ENCODE measurements at regions of chr1 and their contacts with region 1.

Region 1: GRCh38 chr1:201559679-201560162 is 20.8 kb downstream of the NAV1 start:
- DNase-seq: peak; percentile 77
- ATAC-seq: peak; percentile 99
- H3K4me3 Mint-ChIP-seq: no peak overlapping the region
- H3K27ac Mint-ChIP-seq: no peak overlapping the region
- H3K4me1 Mint-ChIP-seq: peaks cover 2% of the 10 kb centered on the region
- H3K27me3 Mint-ChIP-seq: no peaks in the 10 kb centered on the region
- CTCF ChIP-seq: peak; percentile 91

Region 2: DNA sequence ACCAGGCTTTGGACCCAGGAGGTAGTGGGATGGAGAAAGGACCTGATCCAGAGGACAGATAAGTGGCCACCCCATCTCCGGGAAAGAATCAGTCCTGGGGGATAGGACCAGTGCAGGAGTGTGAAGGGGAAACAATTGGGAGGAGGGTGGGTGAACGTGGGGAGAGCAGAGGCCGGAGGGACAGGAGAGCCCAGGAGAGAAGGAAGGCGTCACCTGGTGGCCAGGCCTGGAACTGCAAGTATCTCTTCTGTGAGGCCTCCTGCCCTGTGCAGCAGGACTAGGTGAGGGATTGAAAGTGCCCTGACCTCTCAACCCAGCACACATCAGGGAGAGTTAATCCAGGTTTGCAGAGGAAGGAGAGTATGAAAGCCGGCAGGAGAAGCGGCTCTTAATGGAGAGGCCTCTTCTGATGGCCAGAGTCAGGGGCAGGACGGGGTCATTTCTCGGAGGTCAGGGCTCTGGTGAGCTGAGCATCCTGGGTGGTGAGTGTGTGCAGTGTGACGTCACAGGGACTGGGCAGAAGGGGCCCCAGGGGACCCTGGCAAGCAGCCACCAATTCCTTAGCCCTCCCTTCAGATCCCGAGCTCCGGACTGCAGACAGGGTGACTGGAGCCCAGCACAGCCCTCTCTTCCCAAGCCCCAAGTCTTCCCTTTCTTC is 151.4 kb before region 1 on chr1:
- CTCF ChIA-PET with region 1: no interaction called
- POLR2A ChIA-PET with region 1: no interaction called
- intact Hi-C with region 1: no loop called
- DNase-seq: peak; percentile 88
- ATAC-seq: peak; percentile 96
- H3K4me3 Mint-ChIP-seq: no peak overlapping the region
- H3K27ac Mint-ChIP-seq: no peak overlapping the region
- H3K4me1 Mint-ChIP-seq: no peaks in the 10 kb centered on the region
- H3K27me3 Mint-ChIP-seq: peaks cover 5% of the 10 kb centered on the region
- CTCF ChIP-seq: peak; percentile 95

Region 3: GRCh38 chr1:201530741-201531531 is 28.8 kb before region 1 on chr1:
- CTCF ChIA-PET with region 1: interaction called, 10 read pairs
- POLR2A ChIA-PET with region 1: no interaction called
- intact Hi-C with region 1: no loop called
- DNase-seq: peak; percentile 66
- ATAC-seq: peak; percentile 72
- H3K4me3 Mint-ChIP-seq: no peak overlapping the region
- H3K27ac Mint-ChIP-seq: no peak overlapping the region
- H3K4me1 Mint-ChIP-seq: peaks cover 3% of the 10 kb centered on the region
- H3K27me3 Mint-ChIP-seq: peaks cover 6% of the 10 kb centered on the region
- CTCF ChIP-seq: peak; percentile 43

Region 4: GRCh38 chr1:201570886-201571624 is 11.3 kb after region 1 on chr1:
- CTCF ChIA-PET with region 1: interaction called, 19 read pairs
- POLR2A ChIA-PET with region 1: no interaction called
- intact Hi-C with region 1: no loop called
- DNase-seq: no peak
- ATAC-seq: no peak
- H3K4me3 Mint-ChIP-seq: no peak overlapping the region
- H3K27ac Mint-ChIP-seq: no peak overlapping the region
- H3K4me1 Mint-ChIP-seq: no peaks in the 10 kb centered on the region
- H3K27me3 Mint-ChIP-seq: no peaks in the 10 kb centered on the region
- CTCF ChIP-seq: no peak

Region 5: DNA sequence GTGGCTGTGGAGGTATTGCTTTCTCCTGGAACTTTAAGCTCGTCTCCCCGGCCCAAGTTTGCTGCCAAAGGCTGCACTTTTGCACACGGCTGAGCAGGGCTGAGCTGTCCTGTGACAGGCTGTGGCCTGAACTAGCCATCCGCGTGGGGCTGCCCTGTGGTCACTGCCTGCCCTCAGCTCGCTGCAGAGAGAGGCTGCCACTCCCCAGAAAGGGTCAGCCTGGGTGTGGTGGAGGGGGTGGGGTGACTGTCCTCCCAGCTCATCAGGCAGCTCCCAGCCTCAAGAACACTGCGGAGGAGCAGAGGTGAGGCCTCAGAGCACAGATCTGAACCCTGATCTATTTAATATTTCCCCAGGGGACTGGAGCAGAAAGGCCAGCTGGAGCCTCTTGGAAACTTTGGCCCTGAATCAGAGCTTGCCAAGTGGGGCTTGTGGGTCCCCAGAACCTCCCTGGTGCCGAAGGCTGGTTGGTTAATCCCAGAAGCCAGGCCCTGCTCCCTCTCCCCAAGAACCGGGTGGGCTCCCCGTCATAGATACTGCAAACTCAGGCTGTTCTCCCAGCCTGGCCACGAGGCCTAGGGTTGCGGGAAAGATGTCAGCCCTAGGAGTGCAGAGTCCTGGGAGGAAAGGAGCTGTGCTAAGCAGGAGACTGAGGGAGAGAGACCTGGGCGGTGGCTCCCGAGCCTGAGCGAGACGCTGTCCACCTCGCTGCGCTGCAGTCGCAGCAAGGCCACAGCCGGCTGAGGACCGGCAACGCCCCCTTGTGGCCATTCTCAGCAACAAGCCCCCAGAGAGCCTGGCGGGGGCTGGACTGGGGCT is 144.1 kb after region 1 on chr1:
- CTCF ChIA-PET with region 1: interaction called, 64 read pairs
- POLR2A ChIA-PET with region 1: no interaction called
- intact Hi-C with region 1: loop called (anchors 1 kb)
- DNase-seq: peak; percentile 79
- ATAC-seq: peak; percentile 93
- H3K4me3 Mint-ChIP-seq: no peak overlapping the region
- H3K27ac Mint-ChIP-seq: no peak overlapping the region
- H3K4me1 Mint-ChIP-seq: no peaks in the 10 kb centered on the region
- H3K27me3 Mint-ChIP-seq: peaks cover 2% of the 10 kb centered on the region
- CTCF ChIP-seq: peak; percentile 82

Region 6: GRCh38 chr1:201709564-201710295 is 150.0 kb after region 1 on chr1:
- CTCF ChIA-PET with region 1: interaction called, 64 read pairs
- POLR2A ChIA-PET with region 1: no interaction called
- intact Hi-C with region 1: loop called (anchors 1 kb)
- DNase-seq: peak; percentile 76
- ATAC-seq: peak; percentile 99
- H3K4me3 Mint-ChIP-seq: no peak overlapping the region
- H3K27ac Mint-ChIP-seq: no peak overlapping the region
- H3K4me1 Mint-ChIP-seq: no peaks in the 10 kb centered on the region
- H3K27me3 Mint-ChIP-seq: peaks cover 2% of the 10 kb centered on the region
- CTCF ChIP-seq: peak; percentile 82

Region 7: DNA sequence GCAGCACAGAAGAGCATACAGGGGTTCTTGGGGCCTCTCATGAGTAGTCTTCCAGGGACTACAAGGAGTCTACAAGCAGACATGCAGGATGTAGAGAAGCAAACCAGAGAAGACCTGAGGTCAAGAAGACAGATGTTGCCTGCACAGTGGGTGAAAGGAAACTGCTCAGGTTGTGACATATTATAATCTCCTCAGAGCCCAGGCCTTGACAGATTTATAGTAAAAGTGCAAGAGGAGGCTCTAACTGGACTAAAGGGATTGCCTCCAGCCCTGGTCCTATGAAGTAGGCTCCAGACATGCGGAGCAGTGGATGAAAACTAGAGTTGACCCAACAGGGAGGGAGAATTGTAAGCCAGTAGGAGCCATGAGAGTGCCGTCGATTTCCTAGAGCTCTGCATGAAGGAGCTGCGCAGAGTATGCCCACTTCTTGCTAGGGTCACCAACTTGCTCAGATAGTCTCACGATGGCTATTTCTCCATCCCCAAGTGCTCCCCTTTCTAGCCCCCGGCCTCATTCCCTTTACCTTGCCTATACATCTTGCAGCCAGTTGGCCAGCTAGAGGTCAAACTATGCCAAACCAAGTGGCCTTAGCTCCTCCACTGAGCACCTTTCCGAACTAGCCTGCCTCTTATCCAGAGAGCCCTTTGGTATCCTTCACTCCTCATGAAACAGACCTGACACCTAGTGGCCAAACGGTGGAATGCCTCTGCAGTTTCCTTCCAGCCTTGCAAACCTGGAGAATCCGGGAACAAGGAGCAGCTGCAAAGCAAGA is 233.0 kb after region 1 on chr1:
- CTCF ChIA-PET with region 1: interaction called, 23 read pairs
- POLR2A ChIA-PET with region 1: interaction called, 3 read pairs
- intact Hi-C with region 1: loop called (anchors 5 kb)
- DNase-seq: peak; percentile 66
- ATAC-seq: peak; percentile 82
- H3K4me3 Mint-ChIP-seq: no peak overlapping the region
- H3K27ac Mint-ChIP-seq: no peak overlapping the region
- H3K4me1 Mint-ChIP-seq: peaks cover 9% of the 10 kb centered on the region
- H3K27me3 Mint-ChIP-seq: no peaks in the 10 kb centered on the region
- CTCF ChIP-seq: peak; percentile 94